ENCODE measurements at regions of chr17 and their contacts with region 1.

Region 1: GRCh38 chr17:56939901-56940343 is 20.9 kb downstream of the COIL start:
- DNase-seq: peak; percentile 32
- H3K4me3 ChIP-seq: no peak overlapping the region
- H3K27ac ChIP-seq: no peak overlapping the region
- H3K4me1 ChIP-seq: peaks cover 19% of the 10 kb centered on the region
- H3K27me3 ChIP-seq: no peaks in the 10 kb centered on the region
- CTCF ChIP-seq: peak; percentile 60 to 71

Region 2: DNA sequence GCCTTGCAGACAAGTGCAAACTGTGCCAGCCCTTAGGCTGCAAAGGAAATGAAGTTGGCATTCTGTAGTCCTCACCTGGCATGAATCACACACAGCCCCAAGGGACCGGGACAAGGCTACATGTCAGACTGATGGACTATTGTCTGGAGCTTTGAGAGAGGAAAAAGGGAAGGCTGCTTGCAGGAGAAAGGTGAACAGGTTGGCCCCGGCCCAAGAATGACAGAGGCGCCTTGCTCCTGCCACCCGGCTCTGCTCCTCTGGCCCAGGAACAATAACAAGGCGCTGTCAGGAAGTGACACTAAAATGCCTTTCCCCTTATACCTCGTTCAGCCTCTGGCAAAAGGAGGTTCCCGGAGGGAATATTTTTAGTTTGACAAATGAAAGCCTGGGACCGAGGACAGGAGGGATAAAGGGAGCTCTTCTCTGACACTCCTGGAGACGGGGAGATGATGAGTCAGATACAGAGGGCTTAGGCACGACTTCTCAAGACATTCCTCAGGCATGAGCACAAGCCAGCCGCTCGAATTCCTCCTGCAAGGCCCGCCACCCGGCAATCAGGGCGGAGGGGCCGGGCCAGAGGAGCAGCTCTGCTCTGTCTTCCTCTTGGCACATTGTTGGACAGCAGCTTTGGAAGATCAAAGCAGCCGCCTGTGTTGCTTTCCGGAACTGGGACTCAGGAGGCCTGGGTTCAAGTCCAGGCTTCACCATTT is 240.6 kb before region 1 on chr17:
- CTCF ChIA-PET with region 1: no interaction called
- dilution Hi-C with region 1: no loop called
- in situ Hi-C with region 1: no loop called
- intact Hi-C with region 1: loop called (anchors 5 kb)
- DNase-seq: peak; percentile 99
- H3K4me3 ChIP-seq: no peak overlapping the region
- H3K27ac ChIP-seq: peak overlapping the region; percentile 31
- H3K4me1 ChIP-seq: peaks cover 21% of the 10 kb centered on the region
- H3K27me3 ChIP-seq: no peaks in the 10 kb centered on the region
- CTCF ChIP-seq: no peak

Region 3: DNA sequence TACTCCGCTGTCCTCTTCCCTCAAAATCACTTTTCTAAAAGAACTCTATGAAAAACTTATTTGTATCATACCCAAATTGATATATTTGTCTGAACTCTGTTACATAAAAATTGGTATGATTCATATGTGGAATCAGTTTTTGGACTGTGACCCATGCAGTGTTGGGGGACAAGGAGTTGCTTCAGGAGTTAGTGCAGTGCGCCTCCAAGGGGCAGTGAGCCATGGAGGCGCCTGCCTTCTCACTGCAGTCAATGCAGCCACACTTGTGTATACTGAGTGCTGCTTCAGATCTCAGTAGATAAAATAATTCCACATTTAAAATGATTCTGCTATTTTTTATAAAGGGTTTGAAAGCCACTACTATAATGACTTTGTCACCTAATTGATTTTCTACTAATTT is 73.4 kb before region 1 on chr17:
- CTCF ChIA-PET with region 1: no interaction called
- dilution Hi-C with region 1: no loop called
- in situ Hi-C with region 1: no loop called
- intact Hi-C with region 1: no loop called
- DNase-seq: no peak
- H3K4me3 ChIP-seq: no peak overlapping the region
- H3K27ac ChIP-seq: no peak overlapping the region
- H3K4me1 ChIP-seq: no peaks in the 10 kb centered on the region
- H3K27me3 ChIP-seq: no peaks in the 10 kb centered on the region
- CTCF ChIP-seq: no peak